ENCODE measurements at regions of chr7 and their contacts with region 1.

Region 1: DNA sequence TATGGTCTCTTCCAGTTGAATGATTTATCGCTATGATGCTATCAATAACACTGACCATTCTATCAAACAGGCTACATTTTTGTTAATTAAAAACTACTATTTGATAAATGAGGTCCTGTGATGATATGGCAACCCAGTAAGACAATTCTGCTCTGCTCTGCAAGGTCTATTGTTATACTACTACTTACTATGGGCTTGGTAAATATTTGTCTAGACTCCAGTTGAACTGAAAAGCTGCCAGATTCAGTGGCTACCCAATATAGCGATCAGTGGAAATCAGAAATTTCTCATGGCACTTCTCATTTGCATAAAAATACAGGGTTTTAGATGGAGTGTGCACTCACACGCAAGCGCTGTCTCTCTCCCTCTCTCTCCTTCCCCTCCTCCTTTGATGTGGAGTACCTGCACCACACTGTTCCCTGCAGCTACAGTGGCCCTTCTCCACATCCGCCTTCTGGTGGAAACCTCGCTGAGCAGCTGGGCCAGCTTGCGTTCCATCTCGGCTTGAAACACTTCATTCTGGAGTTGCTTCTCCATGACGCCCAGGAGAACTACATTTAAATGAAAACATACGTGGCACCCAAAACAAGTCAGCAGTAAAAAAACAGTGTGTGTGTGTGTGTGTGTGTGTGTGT is 77.9 kb downstream of the KIAA1549 start:
- DNase-seq: peak; percentile 29 to 94 (median 90)
- ATAC-seq: peak; percentile 98
- H3K4me3 ChIP-seq: peak overlapping the region; percentile 38
- H3K4me3 Mint-ChIP-seq: peak overlapping the region; percentile 69 to 94 (median 82)
- H3K27ac ChIP-seq: no peak overlapping the region
- H3K27ac Mint-ChIP-seq: peak overlapping the region; percentile 17 to 97 (median 87)
- H3K4me1 ChIP-seq: peaks cover 20 to 36% of the 10 kb centered on the region in 2 donors
- H3K4me1 Mint-ChIP-seq: peaks cover 25 to 66% (median 56%) of the 10 kb centered on the region in 7 donors
- H3K27me3 ChIP-seq: no peaks in the 10 kb centered on the region
- H3K27me3 Mint-ChIP-seq: peaks cover 0 to 59% (median 5%) of the 10 kb centered on the region in 5 donors

Region 2: DNA sequence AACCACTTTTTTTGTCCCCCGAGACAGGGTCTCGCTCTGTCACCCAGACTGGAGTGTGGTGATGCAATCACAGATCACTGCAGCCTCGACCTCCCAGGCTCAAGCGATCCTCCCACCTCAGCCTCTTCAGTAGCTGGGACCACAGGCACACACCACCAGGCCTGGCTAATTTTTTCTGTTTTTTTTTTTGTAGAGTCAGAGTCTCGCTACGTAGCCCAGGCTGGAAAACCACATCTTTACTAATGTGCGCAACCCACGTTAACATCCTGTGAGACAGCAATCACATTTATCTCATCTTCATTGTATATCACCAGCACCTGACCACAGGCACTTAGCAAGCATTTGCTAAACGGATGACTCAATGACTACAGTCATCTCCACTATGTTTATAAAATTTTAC is 27.5 kb before region 1 on chr7:
- CTCF ChIA-PET with region 1: no interaction called
- POLR2A ChIA-PET with region 1: no interaction called
- intact Hi-C with region 1: loop called in 1 of 2 experiments (anchors 1 kb)
- DNase-seq: peak in 8 of 9 donors; percentile 59 to 77 (median 67)
- ATAC-seq: peak; percentile 98
- H3K4me3 ChIP-seq: no peak overlapping the region
- H3K4me3 Mint-ChIP-seq: peak overlapping the region in 2 of 10 donors; percentile 20 to 29
- H3K27ac ChIP-seq: no peak overlapping the region
- H3K27ac Mint-ChIP-seq: peak overlapping the region in 8 of 9 donors; percentile 16 to 61 (median 48)
- H3K4me1 ChIP-seq: no peaks in the 10 kb centered on the region
- H3K4me1 Mint-ChIP-seq: peaks cover 9 to 23% (median 12%) of the 10 kb centered on the region in 7 donors
- H3K27me3 ChIP-seq: no peaks in the 10 kb centered on the region
- H3K27me3 Mint-ChIP-seq: peaks cover 0 to 9% (median 0%) of the 10 kb centered on the region in 5 donors

Region 3: DNA sequence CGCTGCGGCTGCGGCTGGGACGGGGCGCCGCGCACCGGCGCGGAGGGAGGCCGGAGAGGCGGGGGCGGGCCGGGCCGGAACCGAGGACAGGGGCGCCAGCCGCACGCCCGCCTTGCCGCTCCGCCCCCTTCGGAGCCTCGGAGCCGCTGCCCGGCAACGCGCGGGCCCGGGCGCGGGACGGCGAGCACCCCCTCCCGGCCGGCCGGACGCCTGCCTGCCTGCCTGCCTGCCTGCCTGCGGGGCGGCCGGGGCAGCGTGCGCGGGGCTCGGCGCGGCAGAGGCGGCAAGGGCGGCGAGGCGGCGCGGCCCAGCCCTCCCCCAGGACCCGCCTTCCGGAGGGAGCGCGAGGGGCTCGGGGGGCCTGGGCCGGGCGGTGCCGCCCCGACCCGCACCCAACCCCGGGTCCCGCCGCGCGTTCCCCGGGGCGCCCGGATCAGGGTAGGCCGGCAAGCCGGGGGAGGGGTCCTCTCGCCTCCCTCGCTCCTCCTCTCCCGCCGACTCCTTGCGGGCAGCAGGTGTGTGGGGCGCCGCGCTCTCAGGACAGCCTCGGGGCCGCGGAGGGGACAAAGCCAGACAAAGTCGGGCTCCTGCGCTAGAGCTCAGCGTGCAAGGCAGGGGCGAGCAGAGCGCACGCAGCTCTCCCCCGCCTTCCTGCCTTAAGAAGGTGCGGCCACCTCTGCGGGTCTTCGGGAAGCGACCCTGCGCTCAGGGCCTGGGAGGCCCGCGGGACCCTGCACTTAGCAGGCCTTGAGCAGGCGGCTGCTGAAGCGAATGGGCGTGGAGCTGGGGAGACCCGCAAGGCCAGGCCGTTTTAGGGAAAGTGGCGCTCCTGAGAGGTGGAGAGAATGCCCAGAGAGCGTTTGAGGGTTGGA is 78.3 kb after region 1 on chr7 and contains the start of gene KIAA1549:
- CTCF ChIA-PET with region 1: no interaction called
- POLR2A ChIA-PET with region 1: no interaction called
- intact Hi-C with region 1: loop called (anchors 1 to 5 kb)
- DNase-seq: peak in 8 of 9 donors; percentile 17 to 75 (median 26)
- ATAC-seq: peak; percentile 81
- H3K4me3 ChIP-seq: peak within 1 kb of the TSS; percentile 37
- H3K4me3 Mint-ChIP-seq: peak within 1 kb of the TSS; percentile 83 to 98 (median 90)
- H3K27ac ChIP-seq: no peak within 1 kb of the TSS
- H3K27ac Mint-ChIP-seq: peak within 1 kb of the TSS in 7 of 9 donors; percentile 12 to 82 (median 63)
- H3K4me1 ChIP-seq: peaks cover 5 to 6% of the 10 kb centered on the region in 2 donors
- H3K4me1 Mint-ChIP-seq: peaks cover 10 to 18% (median 13%) of the 10 kb centered on the region in 7 donors
- H3K27me3 ChIP-seq: peaks cover 10 to 13% of the 10 kb centered on the region in 2 donors
- H3K27me3 Mint-ChIP-seq: peaks cover 25 to 49% (median 35%) of the 10 kb centered on the region in 5 donors
- total RNA-seq, gene KIAA1549: 0.16 to 0.56 (median 0.25) TPM in 4 of 5 experiments, not detected in the other